GM10248 (cell line): ENCODE measurements at regions of chr3 and their contacts with region 1.

Region 1: GRCh38 chr3:129490242-129491045 is 38.0 kb upstream of the RHO start:
- DNase-seq: peak; percentile 83
- CTCF ChIP-seq: peak; percentile 93

Region 2: GRCh38 chr3:128917291-128917690 is 573.2 kb before region 1 on chr3:
- CTCF ChIA-PET with region 1: no interaction called
- POLR2A ChIA-PET with region 1: no interaction called
- DNase-seq: no peak
- CTCF ChIP-seq: no peak

Region 3: DNA sequence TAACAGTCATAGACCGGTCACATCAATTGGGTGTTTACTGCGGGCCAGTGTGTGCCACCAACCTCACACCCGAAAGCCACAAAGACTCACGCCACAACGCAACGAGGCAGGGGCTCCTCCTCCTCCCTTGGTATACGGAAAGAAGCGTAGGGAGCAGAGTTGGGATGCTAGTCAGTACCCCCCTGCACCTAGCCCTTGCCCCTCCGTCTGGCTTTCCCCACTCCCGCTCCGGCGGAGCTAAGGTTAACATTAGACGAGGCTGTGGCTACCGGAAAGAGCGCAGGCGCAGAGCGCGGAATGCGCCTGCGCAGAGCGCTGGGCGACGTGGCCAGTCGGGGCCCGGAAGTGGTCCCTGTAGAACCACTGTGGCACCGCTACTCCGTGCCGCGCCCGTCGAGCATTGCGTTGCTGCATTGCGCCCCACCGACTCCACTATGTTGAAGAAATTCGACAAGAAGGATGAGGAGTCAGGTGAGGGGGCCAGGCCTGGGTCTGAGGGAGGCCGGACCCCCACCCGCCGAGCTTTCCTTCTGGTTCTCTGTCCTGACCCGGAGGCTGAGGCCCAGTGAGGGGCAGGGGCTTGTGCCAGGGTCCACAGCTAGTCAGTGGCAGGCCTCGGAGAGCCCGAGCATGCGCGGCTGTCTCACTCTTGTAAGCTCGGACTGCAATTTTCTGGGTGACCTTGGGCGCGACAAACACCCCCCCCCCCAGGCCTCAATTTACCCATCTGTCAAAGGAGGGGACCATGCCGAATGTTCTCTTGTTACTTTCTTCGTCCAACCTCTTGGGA is 241.0 kb before region 1 on chr3 and contains the start of gene COPG1:
- CTCF ChIA-PET with region 1: no interaction called
- POLR2A ChIA-PET with region 1: no interaction called
- DNase-seq: peak; percentile 97
- CTCF ChIP-seq: no peak

Region 4: DNA sequence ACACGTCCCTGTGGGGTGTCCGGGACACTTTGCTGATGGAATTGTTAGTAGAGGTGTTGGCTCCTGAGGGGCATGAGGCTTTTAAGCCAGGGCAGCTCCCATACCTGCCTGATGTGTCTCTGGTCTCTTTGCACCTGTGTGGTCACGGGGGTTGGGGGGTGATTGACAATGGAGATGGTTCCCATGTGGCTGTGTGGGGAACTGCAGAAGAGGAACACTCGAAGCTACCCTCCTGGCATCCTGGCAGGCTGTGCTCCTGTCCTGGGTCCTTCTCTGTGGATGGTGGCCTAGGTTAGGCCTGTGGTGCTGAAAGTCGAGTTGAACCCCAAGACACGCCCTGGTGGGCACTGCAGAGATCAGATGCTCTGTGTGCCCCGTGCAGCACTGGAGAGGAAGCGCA is 138.4 kb before region 1 on chr3:
- CTCF ChIA-PET with region 1: no interaction called
- POLR2A ChIA-PET with region 1: no interaction called
- DNase-seq: no peak
- CTCF ChIP-seq: peak; percentile 5

Region 5: DNA sequence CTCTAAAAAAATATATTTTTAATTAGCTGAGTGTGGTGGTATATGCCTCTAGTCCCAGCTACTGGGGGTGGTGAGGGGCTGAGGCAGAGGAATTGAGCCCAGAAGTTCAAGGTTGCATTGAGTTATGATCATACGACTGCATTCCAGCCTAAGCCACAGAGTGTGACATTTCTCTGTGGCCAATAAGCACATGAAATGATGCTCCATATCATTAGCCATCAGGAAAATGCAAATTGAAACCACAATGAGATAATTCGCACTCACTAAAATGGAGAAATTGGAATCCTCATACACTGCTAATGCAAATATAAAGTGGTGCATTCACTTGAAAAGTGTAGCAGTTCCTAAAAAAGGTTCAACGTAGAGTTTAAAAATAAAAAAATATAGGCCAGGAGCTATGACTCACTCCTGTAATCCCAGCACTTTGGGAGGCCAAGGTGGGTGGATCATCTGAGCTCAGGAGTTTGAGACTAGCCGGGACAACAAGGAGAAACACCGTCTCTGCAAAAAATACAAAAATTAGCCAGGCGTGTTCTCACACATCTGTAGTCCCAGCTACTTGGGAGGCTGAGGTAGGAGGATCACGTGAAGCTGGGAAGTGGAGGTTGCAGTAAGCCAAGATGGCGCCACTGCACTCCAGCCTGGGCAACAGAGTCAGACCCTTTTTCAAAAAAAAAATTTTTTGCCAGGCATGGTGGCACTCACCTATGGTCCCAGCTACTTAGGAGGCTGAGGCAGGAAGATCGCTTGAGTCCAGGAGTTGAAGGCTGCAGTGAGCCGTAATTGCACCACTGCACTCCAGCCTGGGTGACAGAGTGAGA is 15.2 kb before region 1 on chr3:
- CTCF ChIA-PET with region 1: interaction called, 17 read pairs
- POLR2A ChIA-PET with region 1: no interaction called
- DNase-seq: no peak
- CTCF ChIP-seq: no peak

Region 6: DNA sequence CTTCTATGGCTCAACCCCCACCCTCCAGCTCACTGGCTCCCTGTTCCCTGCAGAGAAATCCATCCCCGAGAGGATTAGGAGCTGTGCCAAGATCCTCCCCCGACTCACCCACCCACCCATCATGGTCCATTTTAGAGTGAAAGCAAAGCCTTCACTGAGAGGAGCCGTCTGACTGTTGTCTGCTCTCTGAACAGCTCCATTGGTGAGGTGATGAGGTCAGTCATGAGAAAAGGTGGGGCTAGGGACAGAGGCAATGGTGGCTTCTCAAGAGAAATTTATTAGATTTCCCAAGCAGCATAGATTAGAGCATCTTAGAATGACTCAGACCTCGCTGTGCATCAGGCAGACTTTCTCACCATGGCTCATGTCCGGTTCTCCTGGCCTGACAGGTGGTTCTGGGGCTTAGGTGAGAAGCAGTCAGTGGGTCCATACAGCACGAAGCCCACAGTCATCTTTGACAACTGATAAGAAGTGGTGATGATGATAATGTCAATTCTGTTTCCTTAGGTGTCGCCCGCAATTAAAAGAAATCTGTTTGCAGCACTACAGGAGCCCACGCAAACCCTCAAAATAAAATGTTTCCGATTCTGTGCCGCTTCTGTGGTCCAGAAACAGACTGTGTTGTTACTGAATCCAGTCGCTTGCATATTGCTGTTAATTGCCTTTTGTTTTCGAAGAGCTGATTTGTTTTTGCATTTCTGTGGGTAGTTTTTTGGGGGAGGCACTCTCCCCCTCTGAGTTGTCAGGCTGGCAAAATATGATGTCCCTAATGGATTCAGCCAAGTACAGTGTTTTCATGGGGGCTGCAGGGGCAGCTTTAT is 13.2 kb after region 1 on chr3:
- CTCF ChIA-PET with region 1: interaction called, 48 read pairs
- POLR2A ChIA-PET with region 1: interaction called, 5 read pairs
- DNase-seq: no peak
- CTCF ChIP-seq: no peak

Region 7: GRCh38 chr3:129745253-129745652 is 254.8 kb after region 1 on chr3:
- CTCF ChIA-PET with region 1: no interaction called
- POLR2A ChIA-PET with region 1: no interaction called
- DNase-seq: no peak
- CTCF ChIP-seq: no peak